Activated T-helper 1 cell treated with anti-CD3 and anti-CD28 coated beads, Interleukin-12 subunit alpha, Interleukin-12 subunit beta, Interleukin-2, Interleukin-4 antibody, amounts not matched to agents 30 ng/mL and 10 ng/mL and 1 ng/mL, durations not matched to agents 14 hours and 24 hours and 36 hours (primary cell): ENCODE measurements at regions of chr20 and their contacts with region 1.

Region 1: DNA sequence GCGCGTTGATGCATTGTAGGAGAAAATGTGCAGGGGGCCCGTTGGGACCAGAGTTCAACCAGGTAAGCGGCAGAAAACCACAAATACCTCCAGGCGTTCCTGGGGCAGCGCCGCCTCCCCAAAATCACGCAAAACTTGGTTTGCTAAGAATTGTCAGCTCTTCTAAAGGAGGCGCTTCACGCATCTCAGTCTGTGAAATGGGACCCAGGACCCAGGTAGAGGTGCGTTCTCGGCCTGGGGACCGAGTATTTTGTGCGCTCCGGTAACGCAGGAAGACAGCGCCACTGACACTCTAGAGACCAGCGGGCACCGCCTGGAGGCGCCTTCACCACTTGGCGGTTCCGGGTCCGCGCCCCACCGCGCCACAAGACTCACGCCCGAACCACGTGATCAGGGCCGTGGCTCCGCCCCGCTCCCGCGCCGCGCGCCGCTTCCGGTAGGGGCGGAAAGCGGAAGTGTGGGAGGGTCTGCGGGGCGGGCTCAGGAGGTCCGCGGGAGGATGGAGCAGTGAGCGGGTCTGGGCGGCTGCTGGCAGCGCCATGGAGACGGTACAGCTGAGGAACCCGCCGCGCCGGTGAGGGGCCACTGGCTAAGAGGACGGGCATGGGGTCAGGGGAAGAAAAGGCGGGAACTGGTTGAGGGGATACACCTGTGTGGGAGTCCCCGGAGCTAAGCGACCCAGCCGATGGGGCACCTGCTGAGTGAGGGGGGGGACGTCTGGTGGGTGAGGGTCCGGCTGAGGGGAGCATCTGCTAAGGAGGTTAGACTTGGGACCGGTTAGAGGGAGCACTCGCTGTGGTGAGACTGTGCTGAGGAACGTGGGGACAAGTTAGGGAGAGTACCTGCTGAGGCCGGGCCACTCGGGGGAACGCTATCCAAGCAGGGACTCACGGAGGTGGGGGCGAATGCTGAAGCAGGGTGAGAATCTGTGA is at the start of gene STK4:
- DNase-seq: peak; percentile 95
- H3K4me3 Mint-ChIP-seq: peak within 1 kb of the TSS; percentile 92
- H3K27ac Mint-ChIP-seq: peak within 1 kb of the TSS; percentile 88
- H3K4me1 Mint-ChIP-seq: peaks cover 77% of the 10 kb centered on the region
- H3K27me3 Mint-ChIP-seq: no peaks in the 10 kb centered on the region
- total RNA-seq, gene STK4: 149 and 155 TPM in 2 replicates

Region 2: GRCh38 chr20:44651684-44652423 is 314.4 kb before region 1 on chr20 and contains the start of gene ADA:
- intact Hi-C with region 1: loop called (anchors 5 kb)
- DNase-seq: peak; percentile 47
- H3K4me3 Mint-ChIP-seq: peak within 1 kb of the TSS; percentile 89
- H3K27ac Mint-ChIP-seq: peak within 1 kb of the TSS; percentile 94
- H3K4me1 Mint-ChIP-seq: peaks cover 58% of the 10 kb centered on the region
- H3K27me3 Mint-ChIP-seq: no peaks in the 10 kb centered on the region
- total RNA-seq, gene ADA: 45.1 and 45.5 TPM in 2 replicates

Region 3: DNA sequence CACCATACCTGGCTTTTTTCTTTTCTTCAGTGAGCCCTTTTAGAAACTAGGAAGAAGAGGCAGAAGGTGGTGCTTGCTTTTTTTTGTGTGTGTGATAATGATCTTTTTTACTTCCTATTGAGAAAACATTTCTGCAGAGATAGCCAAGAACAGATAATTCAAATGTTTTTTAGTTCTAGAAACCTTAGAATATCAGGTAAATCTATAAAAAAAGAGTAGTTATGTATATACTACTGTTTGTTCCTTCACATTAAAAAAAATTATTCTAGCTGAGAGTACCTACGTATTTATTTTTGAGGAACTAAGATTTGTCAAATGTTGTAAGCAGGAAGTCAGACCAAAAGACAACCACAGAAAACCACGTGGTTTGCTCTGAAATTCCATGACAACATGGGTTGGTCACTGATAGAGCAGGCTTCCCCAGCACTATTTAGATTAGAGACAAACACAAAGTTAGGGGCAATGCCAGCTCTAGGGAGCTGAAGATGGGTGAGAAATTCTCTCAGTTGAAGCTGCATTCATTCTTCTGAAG is 12.9 kb after region 1 on chr20:
- intact Hi-C with region 1: loop called (anchors 1 kb)
- DNase-seq: peak; percentile 67
- H3K4me3 Mint-ChIP-seq: peak overlapping the region; percentile 73
- H3K27ac Mint-ChIP-seq: peak overlapping the region; percentile 95
- H3K4me1 Mint-ChIP-seq: peaks cover 72% of the 10 kb centered on the region
- H3K27me3 Mint-ChIP-seq: no peaks in the 10 kb centered on the region

Region 4: GRCh38 chr20:45300961-45301360 is 334.7 kb after region 1 on chr20:
- intact Hi-C with region 1: loop called (anchors 5 kb)
- DNase-seq: no peak
- H3K4me3 Mint-ChIP-seq: no peak overlapping the region
- H3K27ac Mint-ChIP-seq: no peak overlapping the region
- H3K4me1 Mint-ChIP-seq: peaks cover 49% of the 10 kb centered on the region
- H3K27me3 Mint-ChIP-seq: no peaks in the 10 kb centered on the region

Region 5: GRCh38 chr20:45752746-45753145 is 786.5 kb after region 1 on chr20:
- intact Hi-C with region 1: loop called (anchors 2 kb)
- DNase-seq: no peak
- H3K4me3 Mint-ChIP-seq: no peak overlapping the region
- H3K27ac Mint-ChIP-seq: peak overlapping the region; percentile 85
- H3K4me1 Mint-ChIP-seq: peaks cover 17% of the 10 kb centered on the region
- H3K27me3 Mint-ChIP-seq: peaks cover 7% of the 10 kb centered on the region